ENCODE measurements at regions of chr20 and their contacts with region 1.

Region 1: DNA sequence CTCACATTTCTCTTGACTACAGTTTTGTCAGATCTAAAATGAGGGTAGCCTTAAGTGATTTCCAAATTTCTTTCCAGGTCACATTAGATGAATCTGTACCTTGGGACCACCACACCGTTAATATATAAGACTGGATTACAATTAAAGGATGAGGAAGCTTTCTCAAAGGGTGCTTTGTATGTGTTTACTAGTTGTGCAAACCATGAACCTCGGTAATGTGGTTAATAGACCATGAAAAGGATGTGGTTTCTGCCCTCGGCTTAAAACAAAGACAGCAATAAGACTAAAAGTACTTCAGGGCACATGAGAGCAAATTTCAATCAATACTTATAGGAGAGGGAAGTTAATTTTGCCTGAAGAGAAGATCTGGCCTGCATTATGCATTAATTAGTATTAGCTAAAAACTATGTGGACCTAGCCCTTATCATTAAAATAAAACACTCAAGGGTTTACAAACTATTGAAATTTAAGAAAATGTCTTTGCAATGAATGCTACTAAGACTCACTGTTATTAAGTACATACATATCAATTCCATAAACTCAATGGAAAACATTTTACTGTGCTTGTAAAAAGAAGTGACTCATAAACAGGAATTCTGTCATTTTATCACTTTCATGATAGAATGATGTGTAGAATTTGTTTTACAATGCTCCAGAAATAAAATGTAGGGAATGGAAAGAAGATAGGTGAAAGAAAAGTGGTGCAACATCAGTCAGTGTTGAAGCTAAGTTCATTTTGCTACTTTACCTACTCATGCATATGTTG is 936 bp upstream of the TMX4 start:
- DNase-seq: peak; percentile 15 to 47 (median 21)
- H3K4me3 ChIP-seq: peak overlapping the region in 2 of 3 experiments; percentile 48 to 97
- H3K4me3 Mint-ChIP-seq: peak overlapping the region in 1 of 2 donors; percentile 75
- H3K27ac ChIP-seq: peak overlapping the region in 1 of 2 donors; percentile 92
- H3K27ac Mint-ChIP-seq: no peak overlapping the region
- H3K4me1 ChIP-seq: peaks cover 27 to 45% of the 10 kb centered on the region in 2 donors
- H3K4me1 Mint-ChIP-seq: peaks cover 15% of the 10 kb centered on the region
- H3K27me3 ChIP-seq: no peaks in the 10 kb centered on the region
- H3K27me3 Mint-ChIP-seq: peaks cover 0 to 2% (median 0%) of the 10 kb centered on the region in 3 donors
- CTCF ChIP-seq: no peak

Region 2: GRCh38 chr20:7828437-7828836 is 192.1 kb before region 1 on chr20:
- intact Hi-C with region 1: no loop called
- DNase-seq: no peak
- H3K4me3 ChIP-seq: no peak overlapping the region
- H3K4me3 Mint-ChIP-seq: no peak overlapping the region
- H3K27ac ChIP-seq: no peak overlapping the region
- H3K27ac Mint-ChIP-seq: no peak overlapping the region
- H3K4me1 ChIP-seq: no peaks in the 10 kb centered on the region
- H3K4me1 Mint-ChIP-seq: no peaks in the 10 kb centered on the region
- H3K27me3 ChIP-seq: no peaks in the 10 kb centered on the region
- H3K27me3 Mint-ChIP-seq: peaks cover 0 to 3% (median 0%) of the 10 kb centered on the region in 3 donors
- CTCF ChIP-seq: no peak

Region 3: DNA sequence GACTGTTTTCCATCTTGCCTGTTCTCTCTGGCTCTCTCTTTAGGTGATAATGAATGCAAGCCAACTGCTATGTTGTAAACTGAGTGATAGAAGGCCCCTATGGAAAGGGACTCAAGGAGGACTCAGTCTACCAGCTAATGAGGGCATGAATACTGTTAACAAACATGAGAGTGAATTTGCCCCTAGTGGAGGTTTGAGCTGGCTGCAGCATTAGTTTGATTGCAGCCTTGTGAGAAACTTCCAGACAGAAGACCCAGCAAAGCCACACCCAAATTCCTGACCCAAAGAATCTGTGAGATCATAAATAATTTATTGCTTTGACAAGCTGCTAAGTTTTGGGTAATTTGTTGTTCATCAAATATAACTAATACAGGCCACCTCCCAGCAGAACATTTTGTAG is 61.5 kb after region 1 on chr20:
- intact Hi-C with region 1: no loop called
- DNase-seq: no peak
- H3K4me3 ChIP-seq: no peak overlapping the region
- H3K4me3 Mint-ChIP-seq: no peak overlapping the region
- H3K27ac ChIP-seq: no peak overlapping the region
- H3K27ac Mint-ChIP-seq: no peak overlapping the region
- H3K4me1 ChIP-seq: peaks cover 0 to 4% of the 10 kb centered on the region in 2 donors
- H3K4me1 Mint-ChIP-seq: peaks cover 6% of the 10 kb centered on the region
- H3K27me3 ChIP-seq: no peaks in the 10 kb centered on the region
- H3K27me3 Mint-ChIP-seq: no peaks in the 10 kb centered on the region
- CTCF ChIP-seq: peak; percentile 61

Region 4: DNA sequence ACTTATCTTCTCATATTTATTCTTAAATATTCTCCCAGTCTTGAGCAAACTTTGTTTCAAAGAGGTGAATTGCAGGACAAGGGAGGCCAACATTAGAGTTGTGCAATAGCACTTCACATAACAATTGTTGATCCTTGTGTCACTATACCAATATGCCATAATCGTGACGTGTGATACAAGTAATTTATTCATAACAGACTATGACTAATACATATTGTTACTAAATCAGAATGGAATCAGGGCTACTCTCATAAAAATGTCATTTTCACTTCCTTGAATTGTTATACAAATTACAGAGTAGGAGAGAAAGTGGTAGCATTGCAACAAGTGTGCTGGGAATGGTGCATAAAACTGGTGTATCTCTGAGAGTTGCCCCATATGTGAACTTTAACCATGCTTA is 74.4 kb after region 1 on chr20:
- intact Hi-C with region 1: loop called in 1 of 2 experiments (anchors 5 kb)
- DNase-seq: peak; percentile 56 to 81 (median 81)
- H3K4me3 ChIP-seq: no peak overlapping the region
- H3K4me3 Mint-ChIP-seq: no peak overlapping the region
- H3K27ac ChIP-seq: no peak overlapping the region
- H3K27ac Mint-ChIP-seq: peak overlapping the region in 5 of 7 donors; percentile 71 to 92 (median 85)
- H3K4me1 ChIP-seq: peaks cover 6 to 12% of the 10 kb centered on the region in 2 donors
- H3K4me1 Mint-ChIP-seq: peaks cover 14% of the 10 kb centered on the region
- H3K27me3 ChIP-seq: no peaks in the 10 kb centered on the region
- H3K27me3 Mint-ChIP-seq: peaks cover 0 to 2% (median 1%) of the 10 kb centered on the region in 3 donors
- CTCF ChIP-seq: no peak

Region 5: DNA sequence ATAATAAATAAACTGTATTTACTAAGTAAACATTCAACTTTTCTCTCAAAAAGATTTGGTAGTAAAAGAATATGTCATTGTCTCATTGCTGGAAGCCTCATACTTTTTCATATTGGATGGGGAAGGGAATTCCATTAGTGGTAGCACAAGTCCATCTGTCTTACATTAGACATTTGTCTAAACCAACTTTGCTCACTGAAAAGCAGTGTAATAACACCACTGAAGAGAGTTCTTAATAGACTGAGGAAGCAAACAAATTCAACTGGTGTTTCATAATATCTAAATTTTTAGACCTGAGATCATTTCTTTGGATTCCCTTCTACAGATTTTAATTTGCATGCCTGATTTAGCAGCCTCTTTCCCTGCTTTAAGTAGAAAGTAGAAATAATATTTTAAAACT is 174.2 kb after region 1 on chr20:
- intact Hi-C with region 1: no loop called
- DNase-seq: no peak
- H3K4me3 ChIP-seq: no peak overlapping the region
- H3K4me3 Mint-ChIP-seq: no peak overlapping the region
- H3K27ac ChIP-seq: no peak overlapping the region
- H3K27ac Mint-ChIP-seq: no peak overlapping the region
- H3K4me1 ChIP-seq: no peaks in the 10 kb centered on the region
- H3K4me1 Mint-ChIP-seq: no peaks in the 10 kb centered on the region
- H3K27me3 ChIP-seq: no peaks in the 10 kb centered on the region
- H3K27me3 Mint-ChIP-seq: no peaks in the 10 kb centered on the region
- CTCF ChIP-seq: no peak

Measured in CD14-positive monocyte (primary cell).